ENCODE measurements at regions of chr1 and their contacts with region 1.

Region 1: GRCh38 chr1:3453203-3453761 is 1.2 kb upstream of the ARHGEF16 start:
- DNase-seq: peak; percentile 30
- H3K4me3 ChIP-seq: no peak overlapping the region
- H3K27ac ChIP-seq: no peak overlapping the region
- H3K27me3 ChIP-seq: peaks cover 15% of the 10 kb centered on the region
- CTCF ChIP-seq: peak; percentile 89

Region 2: GRCh38 chr1:3471302-3472087 is 18.2 kb after region 1 on chr1:
- CTCF ChIA-PET with region 1: interaction called, 43 read pairs
- POLR2A ChIA-PET with region 1: interaction called, 3 read pairs
- DNase-seq: no peak
- H3K4me3 ChIP-seq: no peak overlapping the region
- H3K27ac ChIP-seq: no peak overlapping the region
- H3K27me3 ChIP-seq: no peaks in the 10 kb centered on the region
- CTCF ChIP-seq: peak; percentile 51

Region 3: DNA sequence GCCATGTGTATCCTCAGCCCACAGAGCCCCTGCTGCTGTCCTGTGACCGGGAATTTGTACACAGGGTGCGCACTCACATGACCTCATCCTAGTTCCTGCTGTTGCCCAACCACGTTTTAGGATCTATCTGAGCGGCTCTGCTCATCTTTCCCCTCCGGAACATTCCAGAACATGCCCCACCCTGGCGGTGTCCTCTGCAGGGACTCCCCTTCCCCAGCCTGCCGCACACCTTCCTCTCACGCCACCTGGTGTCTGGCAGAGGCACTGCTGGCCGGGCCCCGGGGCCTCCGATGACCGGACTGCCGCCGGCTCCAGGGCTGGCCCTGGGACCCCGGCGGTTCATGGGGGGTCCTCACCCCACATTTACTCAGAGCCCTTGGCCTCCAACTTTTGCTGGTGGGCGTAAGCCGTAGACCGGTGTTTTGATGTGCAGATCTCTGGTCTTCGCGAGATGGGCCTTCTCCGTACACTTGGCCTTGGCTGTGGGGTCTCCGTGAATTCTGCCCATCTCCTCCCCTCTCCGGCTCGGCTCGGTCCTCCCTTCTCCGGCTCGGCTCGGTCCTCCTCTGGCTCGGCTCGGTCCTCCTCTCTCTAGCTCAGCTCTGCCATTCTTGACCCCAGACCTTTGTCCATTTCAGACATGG is 30.6 kb after region 1 on chr1:
- CTCF ChIA-PET with region 1: interaction called, 99 read pairs
- POLR2A ChIA-PET with region 1: no interaction called
- DNase-seq: no peak
- H3K4me3 ChIP-seq: no peak overlapping the region
- H3K27ac ChIP-seq: no peak overlapping the region
- H3K27me3 ChIP-seq: peaks cover 6% of the 10 kb centered on the region
- CTCF ChIP-seq: peak; percentile 89

Region 4: DNA sequence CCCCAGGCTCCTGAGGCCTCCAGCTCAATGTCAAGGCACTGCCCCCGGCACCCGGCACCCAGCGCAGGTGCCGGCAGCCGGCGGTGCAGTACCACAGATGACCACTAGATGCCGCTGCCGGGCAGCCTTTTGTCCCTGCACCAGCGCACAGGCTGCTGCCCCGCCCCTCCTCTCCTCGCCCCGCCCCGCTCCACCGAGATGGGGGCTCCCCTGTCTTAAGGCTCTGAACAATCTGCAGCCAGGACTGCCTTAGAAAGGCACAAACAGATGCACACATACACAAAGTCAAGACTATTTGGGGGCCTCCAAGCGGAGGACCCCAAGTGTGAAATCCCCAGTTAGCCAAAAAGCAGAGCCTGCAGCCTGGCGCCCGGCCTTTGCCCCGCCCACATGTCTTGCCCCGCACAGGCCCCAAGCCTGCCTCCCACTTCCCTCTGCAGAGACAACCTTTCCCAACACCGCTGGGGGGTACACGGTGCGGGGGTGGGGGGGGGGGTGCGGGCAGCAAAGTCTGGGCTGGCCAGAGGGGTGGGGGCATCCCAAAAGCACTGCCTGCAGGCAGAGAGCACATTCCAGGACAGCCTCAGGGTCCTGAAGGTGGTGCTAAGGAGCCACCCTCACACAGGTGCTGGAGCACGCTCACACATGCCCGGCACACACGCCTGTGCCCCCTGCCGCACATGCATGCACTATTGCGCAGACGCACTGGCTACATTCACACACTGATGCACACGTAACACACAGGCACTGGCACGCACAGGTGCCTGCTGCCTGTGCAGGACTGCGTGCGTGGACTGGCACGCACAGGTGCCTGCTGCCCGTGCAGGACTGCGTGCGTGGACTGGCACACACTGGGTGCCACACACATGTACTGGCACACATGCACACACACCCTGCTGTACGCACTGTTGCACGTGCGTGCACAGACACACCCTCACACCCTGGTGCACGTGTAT is 38.3 kb after region 1 on chr1:
- CTCF ChIA-PET with region 1: interaction called, 99 read pairs
- POLR2A ChIA-PET with region 1: no interaction called
- DNase-seq: no peak
- H3K4me3 ChIP-seq: no peak overlapping the region
- H3K27ac ChIP-seq: no peak overlapping the region
- H3K27me3 ChIP-seq: peaks cover 6% of the 10 kb centered on the region
- CTCF ChIP-seq: peak; percentile 91

Region 5: GRCh38 chr1:3624200-3625136 is 171.2 kb after region 1 on chr1 and contains the start of gene TPRG1L:
- CTCF ChIA-PET with region 1: interaction called, 64 read pairs
- POLR2A ChIA-PET with region 1: no interaction called
- DNase-seq: peak; percentile 84
- H3K4me3 ChIP-seq: peak within 1 kb of the TSS; percentile 88
- H3K27ac ChIP-seq: peak within 1 kb of the TSS; percentile 21
- H3K27me3 ChIP-seq: no peaks in the 10 kb centered on the region
- CTCF ChIP-seq: no peak
- polyA plus RNA-seq, gene TPRG1L: 44.2 and 45.1 TPM in 2 replicates

Region 6: GRCh38 chr1:3630161-3630611 is 176.9 kb after region 1 on chr1:
- CTCF ChIA-PET with region 1: interaction called, 12 read pairs
- POLR2A ChIA-PET with region 1: no interaction called
- DNase-seq: no peak
- H3K4me3 ChIP-seq: no peak overlapping the region
- H3K27ac ChIP-seq: no peak overlapping the region
- H3K27me3 ChIP-seq: no peaks in the 10 kb centered on the region
- CTCF ChIP-seq: no peak